Activated CD4-positive, alpha-beta T cell treated with anti-CD3 and anti-CD28 coated beads for 36 hours (primary cell): ENCODE measurements at regions of chr1 and their contacts with region 1.

Region 1: GRCh38 chr1:167447521-167448136 is 70.7 kb downstream of the CD247 start:
- DNase-seq: peak; percentile 87
- ATAC-seq: peak; percentile 86
- H3K4me3 Mint-ChIP-seq: peak overlapping the region; percentile 56
- H3K27ac Mint-ChIP-seq: peak overlapping the region; percentile 94
- H3K4me1 Mint-ChIP-seq: peaks cover 86% of the 10 kb centered on the region
- H3K27me3 Mint-ChIP-seq: no peaks in the 10 kb centered on the region

Region 2: GRCh38 chr1:167486090-167486824 is 38.6 kb after region 1 on chr1:
- CTCF ChIA-PET with region 1: interaction called, 9 read pairs
- POLR2A ChIA-PET with region 1: interaction called, 4 read pairs
- intact Hi-C with region 1: loop called in 1 of 2 experiments (anchors 2 kb)
- DNase-seq: peak; percentile 42
- ATAC-seq: no peak
- H3K4me3 Mint-ChIP-seq: peak overlapping the region; percentile 45
- H3K27ac Mint-ChIP-seq: peak overlapping the region; percentile 89
- H3K4me1 Mint-ChIP-seq: peaks cover 96% of the 10 kb centered on the region
- H3K27me3 Mint-ChIP-seq: no peaks in the 10 kb centered on the region

Region 3: GRCh38 chr1:167491586-167492461 is 44.2 kb after region 1 on chr1:
- CTCF ChIA-PET with region 1: interaction called, 9 read pairs
- POLR2A ChIA-PET with region 1: interaction called, 4 read pairs
- intact Hi-C with region 1: loop called (anchors 1 to 2 kb)
- DNase-seq: peak; percentile 66
- ATAC-seq: peak; percentile 41
- H3K4me3 Mint-ChIP-seq: peak overlapping the region; percentile 55
- H3K27ac Mint-ChIP-seq: peak overlapping the region; percentile 92
- H3K4me1 Mint-ChIP-seq: peaks cover 96% of the 10 kb centered on the region
- H3K27me3 Mint-ChIP-seq: no peaks in the 10 kb centered on the region

Region 4: GRCh38 chr1:167627865-167628641 is 180.4 kb after region 1 on chr1:
- CTCF ChIA-PET with region 1: no interaction called
- POLR2A ChIA-PET with region 1: no interaction called
- intact Hi-C with region 1: loop called in 1 of 2 experiments (anchors 2 kb)
- DNase-seq: peak; percentile 87
- ATAC-seq: peak; percentile 85
- H3K4me3 Mint-ChIP-seq: peak overlapping the region; percentile 85
- H3K27ac Mint-ChIP-seq: peak overlapping the region; percentile 98
- H3K4me1 Mint-ChIP-seq: peaks cover 53% of the 10 kb centered on the region
- H3K27me3 Mint-ChIP-seq: no peaks in the 10 kb centered on the region